GM23248 (cell line): ENCODE measurements at regions of chr3 and their contacts with region 1.

Region 1: DNA sequence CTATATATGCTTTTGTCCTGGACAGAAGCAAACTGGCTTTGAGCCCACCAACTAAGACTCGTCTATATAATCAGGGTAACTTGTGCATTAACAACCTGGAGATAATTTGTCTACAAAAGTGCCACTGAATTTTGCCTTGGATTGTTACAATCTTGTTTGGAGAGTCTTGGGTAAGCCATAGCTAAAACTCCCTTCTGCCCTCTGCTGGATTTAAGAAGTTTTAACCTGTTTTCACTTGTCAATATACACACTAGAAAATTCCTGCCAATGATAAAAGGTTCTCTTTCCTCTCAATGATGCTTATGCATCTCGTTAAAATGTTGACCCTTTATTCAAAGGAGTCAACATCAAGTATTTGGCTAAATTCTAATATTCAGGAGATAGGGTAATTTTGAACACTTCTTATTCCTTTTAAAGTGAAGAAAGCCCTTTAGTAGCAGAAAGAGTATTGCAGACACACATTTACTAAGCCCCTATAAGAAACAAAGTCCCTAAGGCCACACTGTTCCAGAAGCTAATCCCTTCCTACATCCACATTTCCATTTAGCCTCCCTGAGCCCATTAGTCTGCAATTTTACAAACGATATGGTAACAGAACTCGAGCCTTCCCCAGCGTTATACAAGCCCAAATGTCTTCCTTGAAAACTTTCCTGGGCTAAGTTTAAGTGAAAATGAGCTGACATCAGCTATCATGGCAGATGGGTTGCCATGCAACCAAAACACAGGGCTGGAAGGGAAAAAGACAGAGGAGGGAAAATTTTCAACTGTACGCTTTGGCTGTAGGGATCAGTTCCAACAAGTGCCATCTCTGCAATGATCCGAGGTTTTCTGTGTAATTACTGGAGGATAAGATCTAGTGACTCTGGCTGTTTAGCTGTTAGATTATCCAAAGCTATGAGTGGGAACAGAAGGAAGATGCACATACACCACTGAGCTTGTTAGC is 75.9 kb upstream of the FGF12 start:
- DNase-seq: peak; percentile 69
- H3K4me3 ChIP-seq: no peak overlapping the region
- H3K27ac ChIP-seq: no peak overlapping the region
- H3K4me1 ChIP-seq: no peaks in the 10 kb centered on the region
- H3K27me3 ChIP-seq: no peaks in the 10 kb centered on the region

Region 2: DNA sequence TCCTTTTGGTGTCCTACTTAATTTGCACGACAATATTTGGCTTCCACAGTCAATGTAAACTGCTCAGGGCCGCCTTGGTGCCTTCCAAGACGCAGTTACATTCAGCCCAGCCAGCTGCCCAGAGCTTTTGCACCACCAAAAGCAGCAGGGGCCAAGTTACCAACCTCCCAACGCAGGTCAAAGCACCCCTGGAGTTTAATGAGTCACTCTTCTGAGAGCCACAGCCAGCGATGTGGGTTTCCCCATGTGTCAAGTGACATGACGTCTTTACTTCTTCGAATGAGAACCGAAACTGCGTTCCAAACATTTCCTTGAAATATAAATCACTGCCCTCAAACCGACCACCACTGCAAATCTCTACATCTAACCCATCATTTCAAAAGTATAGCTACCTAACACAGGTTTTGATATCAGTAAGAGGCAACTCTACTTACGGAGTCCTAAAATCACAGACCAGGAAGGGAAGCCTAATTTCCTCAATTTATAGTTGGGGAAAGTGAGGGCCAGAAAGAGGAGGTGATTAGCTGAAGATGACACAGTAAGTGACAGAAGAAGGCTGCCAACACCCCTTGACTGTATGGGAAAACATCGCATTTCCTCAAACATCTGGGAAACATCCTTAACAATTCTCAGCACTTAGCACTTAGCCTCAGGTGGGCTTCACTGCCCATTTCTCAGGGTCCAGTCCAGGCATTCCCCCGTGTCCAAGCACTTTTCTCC is 89.9 kb after region 1 on chr3:
- in situ Hi-C with region 1: no loop called
- DNase-seq: peak; percentile 88
- H3K4me3 ChIP-seq: peak overlapping the region; percentile 49
- H3K27ac ChIP-seq: peak overlapping the region; percentile 53
- H3K4me1 ChIP-seq: peaks cover 44% of the 10 kb centered on the region
- H3K27me3 ChIP-seq: no peaks in the 10 kb centered on the region

Region 3: DNA sequence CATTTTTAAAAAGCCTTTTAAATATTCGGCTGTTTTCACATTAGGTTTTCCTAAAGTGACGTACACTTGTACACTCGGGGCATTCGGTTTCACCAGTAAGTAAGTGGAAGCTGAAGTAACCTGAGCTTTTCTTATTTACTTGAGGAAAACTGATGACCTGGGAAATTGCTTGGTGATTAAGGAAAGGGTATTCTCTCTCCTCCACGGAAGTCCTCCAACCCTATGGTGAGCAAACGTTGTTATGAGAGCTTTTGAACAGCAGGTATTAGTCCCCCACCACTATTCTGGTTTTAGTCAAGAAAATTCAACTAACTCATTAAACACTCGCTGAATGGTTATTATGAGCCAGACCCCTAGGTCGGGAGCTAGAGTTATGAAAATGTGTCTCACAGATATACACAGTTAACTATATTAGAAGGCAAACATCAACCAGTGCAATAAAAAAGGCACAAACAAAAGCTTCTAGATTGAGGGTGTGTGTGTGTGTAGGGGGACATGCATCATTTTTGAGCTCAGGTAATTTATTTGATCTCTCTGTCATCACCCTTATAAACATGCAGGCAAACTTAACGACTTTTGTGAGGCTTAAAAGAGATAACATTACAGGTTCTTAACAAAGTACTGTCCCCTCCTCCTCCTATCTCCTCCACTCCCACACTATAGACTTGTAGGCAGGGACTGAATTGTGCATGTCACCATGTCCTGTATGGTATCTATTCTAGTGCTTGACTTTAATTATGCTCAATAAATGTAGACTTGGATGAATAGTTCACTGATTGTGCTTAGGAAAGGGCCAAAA is 257.7 kb after region 1 on chr3:
- in situ Hi-C with region 1: no loop called
- DNase-seq: no peak
- H3K4me3 ChIP-seq: no peak overlapping the region
- H3K27ac ChIP-seq: no peak overlapping the region
- H3K4me1 ChIP-seq: no peaks in the 10 kb centered on the region
- H3K27me3 ChIP-seq: 0 out of 2 replicates have a peak, but pooled peaks cover 9% of the 10 kb centered on the region

Region 4: GRCh38 chr3:193452338-193452737 is 649.1 kb after region 1 on chr3:
- in situ Hi-C with region 1: loop called (anchors 25 kb)
- DNase-seq: peak; percentile 18
- H3K4me3 ChIP-seq: no peak overlapping the region
- H3K27ac ChIP-seq: no peak overlapping the region
- H3K4me1 ChIP-seq: no peaks in the 10 kb centered on the region
- H3K27me3 ChIP-seq: no peaks in the 10 kb centered on the region

Region 5: GRCh38 chr3:193572426-193572908 is 769.2 kb after region 1 on chr3:
- in situ Hi-C with region 1: loop called (anchors 25 kb)
- DNase-seq: peak; percentile 73
- H3K4me3 ChIP-seq: no peak overlapping the region
- H3K27ac ChIP-seq: no peak overlapping the region
- H3K4me1 ChIP-seq: peaks cover 5% of the 10 kb centered on the region; the same call in 1 of the 2 replicates
- H3K27me3 ChIP-seq: peaks cover 10% of the 10 kb centered on the region